GM10248 (cell line): ENCODE measurements at regions of chr5 and their contacts with region 1.

Region 1: DNA sequence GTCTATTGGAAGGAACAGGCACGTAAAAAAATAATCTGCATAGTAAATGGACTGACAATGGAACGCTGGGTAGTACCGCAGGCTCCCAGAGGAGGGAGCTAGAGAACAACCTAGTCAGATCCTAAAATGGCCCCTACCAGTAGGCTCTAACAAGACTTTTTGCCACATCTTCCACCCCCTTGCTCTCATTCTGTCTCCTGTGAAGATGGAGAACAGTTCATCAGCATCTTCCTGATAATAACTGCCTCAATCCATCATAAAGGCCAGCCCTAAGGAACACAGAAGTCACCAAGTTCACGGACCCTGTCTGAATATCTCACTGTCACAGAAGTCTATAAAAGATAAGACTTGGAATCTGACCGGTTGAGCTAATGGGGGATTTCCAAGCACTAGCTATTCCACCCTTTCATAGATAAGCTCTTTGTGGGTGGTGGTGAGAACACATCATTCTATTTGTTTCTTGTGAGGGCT is 133.4 kb downstream of the SLC1A3 start:
- DNase-seq: peak; percentile 67
- CTCF ChIP-seq: peak; percentile 93

Region 2: DNA sequence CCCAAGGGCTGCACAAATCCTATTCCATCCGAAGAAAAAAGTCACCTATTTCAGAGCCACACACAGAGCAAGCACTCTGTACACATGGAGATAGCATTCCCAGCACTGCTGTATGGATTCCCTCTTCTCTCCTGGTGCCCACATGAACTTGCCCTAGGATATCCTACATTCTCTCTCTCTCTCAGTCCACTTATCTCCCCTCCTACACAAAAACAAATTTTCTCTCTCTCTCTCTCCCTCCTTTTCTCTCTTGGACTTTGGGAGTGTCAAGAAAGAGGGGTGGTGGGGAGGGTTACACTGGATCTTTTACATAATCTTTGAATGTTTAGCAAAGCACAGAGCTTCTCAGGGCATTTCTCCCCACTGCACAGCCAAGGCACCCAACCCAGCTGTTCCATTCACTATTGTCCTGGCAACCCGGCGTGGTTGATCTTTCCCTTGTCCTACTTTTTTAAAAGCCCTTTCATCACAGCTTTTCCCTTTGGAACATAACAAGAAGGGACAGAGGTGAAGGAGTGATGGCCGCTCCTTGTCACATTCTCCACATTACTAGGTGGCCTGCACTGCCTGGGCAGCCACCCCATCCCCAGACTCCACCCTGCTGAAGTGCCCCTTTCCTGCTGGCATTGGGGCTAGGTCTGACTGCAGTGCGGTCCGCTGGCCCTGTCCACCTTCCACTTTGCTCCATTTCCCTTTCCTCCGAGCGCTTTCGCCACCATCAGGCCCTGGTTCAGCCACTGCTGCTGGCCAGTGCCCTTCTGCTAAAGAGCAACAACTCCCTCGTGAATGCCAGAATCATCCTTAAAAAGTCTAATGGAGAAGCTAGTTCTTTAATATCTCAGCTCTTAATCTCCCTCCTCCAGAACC is 155.5 kb before region 1 on chr5:
- CTCF ChIA-PET with region 1: no interaction called
- POLR2A ChIA-PET with region 1: no interaction called
- DNase-seq: no peak
- CTCF ChIP-seq: no peak

Region 3: DNA sequence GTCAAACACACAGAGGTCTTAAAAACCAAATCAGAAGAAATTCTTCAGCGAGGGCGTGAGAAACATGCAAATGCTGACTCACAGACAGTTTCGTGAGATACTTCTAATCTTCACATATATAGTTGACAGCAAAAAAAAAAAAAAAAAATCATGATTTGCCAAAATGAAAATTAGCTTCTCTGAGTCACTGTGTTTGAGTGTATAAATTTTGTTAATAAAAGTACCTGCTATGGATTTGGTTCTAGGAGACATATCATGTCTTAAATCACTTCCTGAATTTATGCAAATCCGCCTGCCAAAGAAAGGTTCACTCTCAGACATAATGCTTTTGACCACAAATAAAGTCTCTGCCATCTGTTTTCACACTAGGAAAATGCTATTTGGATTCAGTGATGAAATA is 19.1 kb before region 1 on chr5:
- CTCF ChIA-PET with region 1: interaction called, 95 read pairs
- POLR2A ChIA-PET with region 1: no interaction called
- DNase-seq: peak; percentile 28
- CTCF ChIP-seq: no peak

Region 4: DNA sequence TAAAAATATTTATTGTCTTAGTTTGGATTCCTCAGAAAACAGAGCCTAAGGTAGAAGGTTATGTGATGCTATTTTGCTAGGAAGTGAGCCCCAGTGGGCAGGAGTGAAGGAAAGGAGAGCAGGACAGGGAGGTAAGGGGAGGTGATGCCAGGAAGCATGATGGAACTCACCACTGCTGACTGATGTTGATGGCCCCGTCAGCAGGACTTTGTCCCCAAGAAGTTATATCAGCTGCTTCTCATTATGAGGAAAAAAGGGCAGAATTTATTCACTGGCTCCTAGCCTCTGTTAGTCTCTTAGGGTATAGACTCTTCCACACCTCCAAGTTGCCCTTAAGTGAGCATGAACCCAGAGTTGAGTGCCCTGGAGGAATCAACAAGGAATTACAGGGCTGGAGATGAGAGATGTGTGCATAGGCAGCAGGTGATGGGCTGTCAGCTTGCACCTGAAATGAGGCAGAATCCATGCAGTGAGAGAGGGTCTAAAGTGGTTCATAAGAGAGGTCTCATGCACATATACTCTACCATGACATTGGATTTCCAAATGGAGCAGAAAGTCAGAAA is 16.2 kb after region 1 on chr5:
- CTCF ChIA-PET with region 1: interaction called, 13 read pairs
- POLR2A ChIA-PET with region 1: no interaction called
- DNase-seq: no peak
- CTCF ChIP-seq: no peak

Region 5: DNA sequence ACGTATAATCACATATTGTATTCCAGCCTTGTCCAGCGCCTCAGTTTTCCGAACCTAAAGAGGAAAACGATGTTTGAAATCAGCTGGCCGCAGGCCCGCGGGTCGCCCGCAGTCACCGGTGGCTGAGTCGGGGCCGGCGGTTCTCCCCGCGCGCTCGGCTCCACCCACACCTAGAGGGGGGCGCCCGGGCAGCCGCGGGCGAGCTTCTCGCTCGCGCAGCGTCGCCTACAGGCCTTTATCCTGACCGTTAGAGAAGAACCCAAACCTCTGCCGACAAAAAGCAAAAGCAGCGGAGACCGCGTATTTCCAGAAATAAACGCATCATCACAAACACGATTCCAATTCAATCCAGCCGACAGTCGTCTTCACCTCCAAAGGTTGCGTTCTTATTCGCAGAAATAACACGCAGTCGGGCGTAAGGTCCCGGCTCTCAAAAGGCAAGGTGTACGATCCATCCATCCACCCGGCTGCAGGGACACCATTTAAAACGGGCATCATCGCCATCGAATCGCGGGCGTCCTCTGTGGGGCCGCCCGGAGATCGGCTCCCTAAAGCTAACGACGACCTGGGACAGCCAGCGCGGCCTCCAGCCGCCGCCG is 136.1 kb after region 1 on chr5:
- CTCF ChIA-PET with region 1: interaction called, 68 read pairs
- POLR2A ChIA-PET with region 1: no interaction called
- DNase-seq: peak; percentile 80
- CTCF ChIP-seq: peak; percentile 53

Region 6: DNA sequence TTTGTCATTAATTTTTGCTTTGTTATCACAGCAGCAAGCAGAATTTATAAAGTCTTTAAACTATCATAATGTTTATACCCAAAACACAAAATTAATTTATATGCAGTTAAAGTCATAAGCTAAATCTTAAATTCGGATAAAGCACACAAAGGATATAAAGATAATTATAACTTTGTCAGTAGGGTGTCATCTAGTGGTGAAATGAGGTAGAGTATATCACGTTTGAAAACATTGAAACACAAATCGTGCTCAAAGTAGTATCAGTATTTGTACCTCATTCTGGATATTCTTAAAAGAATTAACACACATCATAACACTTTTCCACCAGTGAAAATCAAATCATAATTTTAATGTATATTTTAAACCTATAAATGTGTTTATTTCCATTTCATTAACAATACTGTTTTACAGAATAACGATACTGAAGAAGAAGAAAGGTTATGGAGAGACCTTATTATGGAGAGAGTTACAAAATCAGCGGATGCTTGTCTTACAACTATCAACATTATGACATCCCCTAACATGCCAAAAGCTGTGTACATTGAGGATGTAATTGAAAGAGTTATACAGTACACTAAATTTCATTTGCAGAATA is 266.3 kb after region 1 on chr5:
- CTCF ChIA-PET with region 1: interaction called, 50 read pairs
- POLR2A ChIA-PET with region 1: no interaction called
- DNase-seq: peak; percentile 14
- CTCF ChIP-seq: peak; percentile 53